H1 (cell line): ENCODE measurements at regions of chr1 and their contacts with region 1.

Region 1: GRCh38 chr1:36864182-36864822 is 170.0 kb downstream of the GRIK3 start:
- DNase-seq: peak in 1 of 2 experiments; percentile 88
- H3K4me3 ChIP-seq: no peak overlapping the region
- H3K27ac ChIP-seq: no peak overlapping the region
- H3K4me1 ChIP-seq: no peaks in the 10 kb centered on the region
- H3K27me3 ChIP-seq: no peaks in the 10 kb centered on the region
- CTCF ChIP-seq: peak; percentile 75 to 93 (median 92)
- EP300 ChIP-seq: no peak
- POLR2A ChIP-seq: no peak
- RAD21 ChIP-seq: peak; percentile 54 to 69

Region 2: DNA sequence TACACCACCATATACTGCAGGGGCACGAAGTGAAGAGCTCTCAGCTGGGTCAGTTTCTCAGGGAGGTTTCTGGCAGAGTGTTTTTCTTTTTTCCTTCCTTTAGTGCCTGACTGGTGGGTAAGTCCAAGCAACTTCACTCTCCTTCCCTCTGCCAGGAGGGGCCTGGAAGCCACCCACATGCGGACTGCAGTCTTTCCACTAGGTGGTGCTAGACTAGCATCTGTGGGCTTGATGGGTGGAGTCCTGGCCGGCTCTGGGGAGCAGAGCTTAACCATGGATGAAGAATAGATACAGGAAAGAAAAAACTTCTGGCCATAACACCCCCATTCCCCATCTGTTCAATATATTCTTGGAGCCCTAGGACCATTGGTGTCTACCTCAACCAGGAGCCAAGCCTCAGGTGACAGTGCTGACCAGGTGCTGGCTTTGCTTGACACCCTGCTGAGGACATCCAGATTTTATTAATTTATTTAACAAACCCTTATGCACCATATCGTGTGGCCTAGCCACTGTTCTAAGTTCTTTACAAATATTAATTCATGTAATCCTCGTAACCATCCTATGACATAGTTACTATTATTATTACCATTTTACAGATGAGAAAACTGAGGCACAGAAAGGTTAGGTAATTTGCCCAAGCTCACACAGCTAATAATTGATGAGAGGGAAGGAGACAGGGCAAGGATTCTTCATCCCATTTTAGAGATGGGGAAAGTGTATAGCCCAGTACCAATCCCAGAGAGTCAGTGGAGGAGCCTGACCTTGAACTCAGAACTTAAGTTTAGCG is 254.9 kb before region 1 on chr1:
- CTCF ChIA-PET with region 1: interaction called, 13 read pairs
- POLR2A ChIA-PET with region 1: no interaction called
- DNase-seq: peak; percentile 47 to 85
- H3K4me3 ChIP-seq: no peak overlapping the region
- H3K27ac ChIP-seq: no peak overlapping the region
- H3K4me1 ChIP-seq: no peaks in the 10 kb centered on the region; a peak in 1 of 7 replicates
- H3K27me3 ChIP-seq: peaks cover 0 to 2% (median 0%) of the 10 kb centered on the region in 4 experiments; a peak in 1 of 7 replicates
- CTCF ChIP-seq: peak; percentile 92 to 95 (median 93)
- EP300 ChIP-seq: no peak
- POLR2A ChIP-seq: no peak
- RAD21 ChIP-seq: peak; percentile 96 to 97

Region 3: GRCh38 chr1:36729716-36730510 is 134.4 kb before region 1 on chr1:
- CTCF ChIA-PET with region 1: interaction called, 26 read pairs
- POLR2A ChIA-PET with region 1: no interaction called
- DNase-seq: no peak
- H3K4me3 ChIP-seq: no peak overlapping the region
- H3K27ac ChIP-seq: no peak overlapping the region
- H3K4me1 ChIP-seq: peaks cover 0 to 9% (median 4%) of the 10 kb centered on the region in 4 experiments; a peak in 5 of 7 replicates
- H3K27me3 ChIP-seq: no peaks in the 10 kb centered on the region
- CTCF ChIP-seq: no peak
- EP300 ChIP-seq: no peak
- POLR2A ChIP-seq: no peak
- RAD21 ChIP-seq: no peak

Region 4: GRCh38 chr1:36781098-36781497 is 83.2 kb before region 1 on chr1:
- CTCF ChIA-PET with region 1: interaction called, 20 read pairs
- POLR2A ChIA-PET with region 1: interaction called, 3 read pairs
- DNase-seq: no peak
- H3K4me3 ChIP-seq: no peak overlapping the region
- H3K27ac ChIP-seq: no peak overlapping the region
- H3K4me1 ChIP-seq: peaks cover 0 to 2% (median under 1%) of the 10 kb centered on the region in 4 experiments; a peak in 2 of 7 replicates
- H3K27me3 ChIP-seq: no peaks in the 10 kb centered on the region
- CTCF ChIP-seq: no peak
- EP300 ChIP-seq: no peak
- POLR2A ChIP-seq: no peak
- RAD21 ChIP-seq: no peak

Region 5: GRCh38 chr1:36836196-36836883 is 28.0 kb before region 1 on chr1:
- CTCF ChIA-PET with region 1: interaction called, 57 read pairs
- POLR2A ChIA-PET with region 1: no interaction called
- DNase-seq: no peak
- H3K4me3 ChIP-seq: no peak overlapping the region
- H3K27ac ChIP-seq: no peak overlapping the region
- H3K4me1 ChIP-seq: peaks cover 0 to 4% (median 0%) of the 10 kb centered on the region in 4 experiments; a peak in 3 of 7 replicates
- H3K27me3 ChIP-seq: no peaks in the 10 kb centered on the region
- CTCF ChIP-seq: no peak
- EP300 ChIP-seq: no peak
- POLR2A ChIP-seq: no peak
- RAD21 ChIP-seq: no peak

Region 6: GRCh38 chr1:36913523-36914060 is 49.3 kb after region 1 on chr1:
- CTCF ChIA-PET with region 1: interaction called, 16 read pairs
- POLR2A ChIA-PET with region 1: no interaction called
- DNase-seq: no peak
- H3K4me3 ChIP-seq: no peak overlapping the region
- H3K27ac ChIP-seq: no peak overlapping the region
- H3K4me1 ChIP-seq: peaks cover 0 to 3% (median 2%) of the 10 kb centered on the region in 4 experiments; a peak in 3 of 7 replicates
- H3K27me3 ChIP-seq: no peaks in the 10 kb centered on the region; a peak in 1 of 7 replicates
- CTCF ChIP-seq: no peak
- EP300 ChIP-seq: no peak
- POLR2A ChIP-seq: no peak
- RAD21 ChIP-seq: no peak

Region 7: GRCh38 chr1:36941316-36941978 is 77.1 kb after region 1 on chr1:
- CTCF ChIA-PET with region 1: interaction called, 17 read pairs
- POLR2A ChIA-PET with region 1: no interaction called
- DNase-seq: no peak
- H3K4me3 ChIP-seq: no peak overlapping the region
- H3K27ac ChIP-seq: no peak overlapping the region
- H3K4me1 ChIP-seq: peaks cover 0 to 4% (median 2%) of the 10 kb centered on the region in 4 experiments; a peak in 2 of 7 replicates
- H3K27me3 ChIP-seq: no peaks in the 10 kb centered on the region
- CTCF ChIP-seq: no peak
- EP300 ChIP-seq: no peak
- POLR2A ChIP-seq: no peak
- RAD21 ChIP-seq: no peak

Region 8: GRCh38 chr1:36951761-36952160 is 87.5 kb after region 1 on chr1:
- CTCF ChIA-PET with region 1: no interaction called
- POLR2A ChIA-PET with region 1: no interaction called
- DNase-seq: no peak
- H3K4me3 ChIP-seq: no peak overlapping the region
- H3K27ac ChIP-seq: no peak overlapping the region
- H3K4me1 ChIP-seq: peaks cover 2 to 8% (median 4%) of the 10 kb centered on the region in 4 experiments; a peak in 5 of 7 replicates
- H3K27me3 ChIP-seq: no peaks in the 10 kb centered on the region
- CTCF ChIP-seq: no peak
- EP300 ChIP-seq: no peak
- POLR2A ChIP-seq: no peak
- RAD21 ChIP-seq: no peak

Region 9: GRCh38 chr1:37009521-37009920 is 145.2 kb after region 1 on chr1:
- CTCF ChIA-PET with region 1: no interaction called
- POLR2A ChIA-PET with region 1: no interaction called
- DNase-seq: no peak
- H3K4me3 ChIP-seq: no peak overlapping the region
- H3K27ac ChIP-seq: no peak overlapping the region
- H3K4me1 ChIP-seq: peaks cover 0 to 10% (median 2%) of the 10 kb centered on the region in 4 experiments; a peak in 3 of 7 replicates
- H3K27me3 ChIP-seq: no peaks in the 10 kb centered on the region; a peak in 1 of 7 replicates
- CTCF ChIP-seq: no peak
- EP300 ChIP-seq: no peak
- POLR2A ChIP-seq: no peak
- RAD21 ChIP-seq: no peak

Region 10: GRCh38 chr1:37323486-37324377 is 459.4 kb after region 1 on chr1:
- CTCF ChIA-PET with region 1: no interaction called
- POLR2A ChIA-PET with region 1: no interaction called
- DNase-seq: peak; percentile 44 to 87
- H3K4me3 ChIP-seq: no peak overlapping the region
- H3K27ac ChIP-seq: no peak overlapping the region
- H3K4me1 ChIP-seq: peaks cover 0 to 5% (median 1%) of the 10 kb centered on the region in 4 experiments; a peak in 3 of 7 replicates
- H3K27me3 ChIP-seq: no peaks in the 10 kb centered on the region; a peak in 1 of 7 replicates
- CTCF ChIP-seq: peak; percentile 67 to 85 (median 76)
- EP300 ChIP-seq: no peak
- POLR2A ChIP-seq: no peak
- RAD21 ChIP-seq: peak; percentile 92 to 94